T-cell (primary cell): ENCODE measurements at regions of chr11 and their contacts with region 1.

Region 1: DNA sequence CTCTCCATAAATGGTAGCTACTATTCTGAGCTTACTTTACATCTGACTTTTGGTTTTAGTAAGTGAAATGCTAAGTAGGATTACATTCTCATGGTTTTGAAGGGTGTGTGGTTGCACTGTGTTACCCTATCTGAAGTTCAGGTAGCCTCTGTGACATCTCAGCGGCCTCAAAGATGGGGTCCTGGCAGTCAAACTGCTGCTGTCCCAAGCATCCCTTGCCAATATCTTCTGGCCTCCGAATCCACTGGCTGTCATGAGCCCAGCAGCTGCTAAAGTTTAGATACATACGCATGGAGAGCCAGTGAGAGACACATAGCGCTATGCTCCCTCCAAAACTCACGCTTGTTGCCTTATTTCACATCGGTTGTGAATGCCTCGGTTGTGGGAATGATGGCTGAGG is 34.9 kb downstream of the UBASH3B start:
- DNase-seq: peak in 1 of 35 experiments; percentile 23
- ATAC-seq: peak in 3 of 4 experiments; percentile 10 to 43 (median 11)
- H3K4me3 ChIP-seq: peak overlapping the region in 1 of 2 donors; percentile 12
- H3K4me3 Mint-ChIP-seq: peak overlapping the region; percentile 61 to 78 (median 76)
- H3K27ac ChIP-seq: peak overlapping the region; percentile 82
- H3K27ac Mint-ChIP-seq: peak overlapping the region; percentile 91
- H3K4me1 ChIP-seq: peaks cover 30 to 62% of the 10 kb centered on the region in 2 experiments
- H3K4me1 Mint-ChIP-seq: peaks cover 74 to 80% (median 78%) of the 10 kb centered on the region in 3 donors
- H3K27me3 ChIP-seq: no peaks in the 10 kb centered on the region
- H3K27me3 Mint-ChIP-seq: no peaks in the 10 kb centered on the region

Region 2: DNA sequence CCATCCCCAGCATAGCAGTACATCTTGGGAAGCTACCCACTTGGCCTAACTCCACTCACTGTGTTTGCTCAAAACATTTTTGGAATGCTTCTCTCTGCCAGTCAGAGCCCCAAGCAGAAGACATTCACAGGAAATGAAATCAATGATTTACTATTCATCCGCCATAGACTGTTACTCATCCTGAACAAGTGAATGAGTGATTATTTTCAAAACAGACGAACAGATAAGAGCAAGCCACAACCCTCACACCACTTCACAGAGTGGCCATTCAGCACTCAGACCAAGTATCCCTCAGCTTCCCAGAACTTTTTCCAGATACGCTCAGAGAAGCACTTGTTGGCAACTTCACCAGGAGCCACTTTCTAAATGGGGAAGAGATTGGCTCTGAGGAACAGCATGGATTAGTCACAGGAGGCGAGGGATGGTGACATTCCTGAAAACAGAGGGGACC is 47.9 kb before region 1 on chr11:
- CTCF ChIA-PET with region 1: no interaction called
- POLR2A ChIA-PET with region 1: no interaction called
- DNase-seq: no peak
- ATAC-seq: no peak
- H3K4me3 ChIP-seq: no peak overlapping the region
- H3K4me3 Mint-ChIP-seq: no peak overlapping the region
- H3K27ac ChIP-seq: no peak overlapping the region
- H3K27ac Mint-ChIP-seq: no peak overlapping the region
- H3K4me1 ChIP-seq: peaks cover 0 to 3% of the 10 kb centered on the region in 2 experiments
- H3K4me1 Mint-ChIP-seq: peaks cover 0 to 3% (median 2%) of the 10 kb centered on the region in 3 donors
- H3K27me3 ChIP-seq: no peaks in the 10 kb centered on the region
- H3K27me3 Mint-ChIP-seq: no peaks in the 10 kb centered on the region

Region 3: GRCh38 chr11:122720107-122720881 is 29.9 kb after region 1 on chr11:
- CTCF ChIA-PET with region 1: no interaction called
- POLR2A ChIA-PET with region 1: interaction called, 3 to 10 read pairs
- DNase-seq: no peak
- ATAC-seq: no peak
- H3K4me3 ChIP-seq: no peak overlapping the region
- H3K4me3 Mint-ChIP-seq: no peak overlapping the region
- H3K27ac ChIP-seq: no peak overlapping the region
- H3K27ac Mint-ChIP-seq: peak overlapping the region; percentile 64 to 69
- H3K4me1 ChIP-seq: peaks cover 34 to 62% of the 10 kb centered on the region in 2 experiments
- H3K4me1 Mint-ChIP-seq: peaks cover 78 to 88% (median 85%) of the 10 kb centered on the region in 3 donors
- H3K27me3 ChIP-seq: no peaks in the 10 kb centered on the region
- H3K27me3 Mint-ChIP-seq: no peaks in the 10 kb centered on the region

Region 4: GRCh38 chr11:123006860-123007542 is 316.6 kb after region 1 on chr11:
- CTCF ChIA-PET with region 1: interaction called in 1 of 2 experiments, 10 read pairs
- POLR2A ChIA-PET with region 1: no interaction called
- DNase-seq: no peak
- ATAC-seq: no peak
- H3K4me3 ChIP-seq: no peak overlapping the region
- H3K4me3 Mint-ChIP-seq: no peak overlapping the region
- H3K27ac ChIP-seq: no peak overlapping the region
- H3K27ac Mint-ChIP-seq: no peak overlapping the region
- H3K4me1 ChIP-seq: no peaks in the 10 kb centered on the region
- H3K4me1 Mint-ChIP-seq: no peaks in the 10 kb centered on the region
- H3K27me3 ChIP-seq: peaks cover 2 to 13% of the 10 kb centered on the region in 2 experiments
- H3K27me3 Mint-ChIP-seq: peaks cover 4 to 5% of the 10 kb centered on the region in 2 donors